Activated CD8-positive, alpha-beta T cell treated with anti-CD3 and anti-CD28 coated beads for 36 hours (primary cell): ENCODE measurements at regions of chr12 and their contacts with region 1.

Region 1: DNA sequence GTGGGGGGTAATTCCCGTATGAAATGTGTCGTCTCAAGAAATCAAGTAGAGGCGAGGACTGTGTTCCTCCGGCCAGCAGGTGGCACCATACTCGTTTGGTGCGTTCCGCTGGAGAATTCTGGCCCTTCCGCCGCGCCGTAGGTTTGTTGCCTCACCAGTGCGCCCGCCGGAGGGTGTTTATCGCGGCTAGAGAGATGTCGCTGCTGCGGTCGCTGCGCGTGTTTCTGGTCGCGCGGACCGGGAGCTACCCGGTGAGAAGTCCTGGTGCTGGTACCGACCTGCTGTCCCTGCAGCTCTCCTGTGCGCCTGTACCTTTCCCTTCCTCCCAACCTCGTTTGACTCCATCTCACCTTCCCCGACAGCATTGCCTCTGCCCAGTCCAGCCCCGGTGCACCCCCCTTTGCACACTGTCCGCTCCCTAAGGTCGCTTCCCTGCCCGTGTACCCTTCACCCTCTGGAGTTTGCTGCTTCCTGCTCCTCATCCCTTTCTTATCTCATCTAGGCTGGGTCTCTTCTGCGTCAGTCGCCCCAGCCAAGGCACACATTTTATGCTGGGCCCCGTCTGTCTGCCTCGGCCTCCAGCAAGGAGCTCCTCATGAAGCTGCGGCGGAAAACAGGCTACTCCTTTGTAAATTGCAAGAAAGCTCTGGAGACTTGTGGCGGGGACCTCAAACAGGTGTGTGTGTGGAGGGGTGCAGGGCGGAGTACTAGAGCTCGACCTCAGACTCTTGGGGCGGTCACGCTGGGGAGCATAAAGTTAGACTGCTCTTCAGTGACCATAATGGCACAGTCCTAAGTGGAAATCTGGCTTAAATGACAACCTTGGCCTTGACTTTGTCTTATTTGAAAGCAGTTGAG is at the start of gene TSFM:
- DNase-seq: peak; percentile 99
- ATAC-seq: peak; percentile 95
- H3K4me3 Mint-ChIP-seq: peak within 1 kb of the TSS; percentile 99
- H3K27ac Mint-ChIP-seq: peak within 1 kb of the TSS; percentile 96
- H3K4me1 Mint-ChIP-seq: peaks cover 28% of the 10 kb centered on the region
- H3K27me3 Mint-ChIP-seq: no peaks in the 10 kb centered on the region
- CTCF ChIP-seq: peak; percentile 97
- total RNA-seq, gene TSFM: 46.3 to 47.3 TPM

Region 2: GRCh38 chr12:57751788-57752667 is 30.8 kb before region 1 on chr12 and contains the start of gene CDK4:
- CTCF ChIA-PET with region 1: interaction called, 16 read pairs
- POLR2A ChIA-PET with region 1: interaction called, 3 read pairs
- intact Hi-C with region 1: no loop called
- DNase-seq: peak; percentile 100
- ATAC-seq: peak; percentile 82
- H3K4me3 Mint-ChIP-seq: peak within 1 kb of the TSS; percentile 86
- H3K27ac Mint-ChIP-seq: peak within 1 kb of the TSS; percentile 94
- H3K4me1 Mint-ChIP-seq: peaks cover 53% of the 10 kb centered on the region
- H3K27me3 Mint-ChIP-seq: no peaks in the 10 kb centered on the region
- CTCF ChIP-seq: no peak
- total RNA-seq, gene CDK4: 218 to 221 TPM

Region 3: GRCh38 chr12:57771708-57772428 is 11.0 kb before region 1 on chr12 and contains the start of gene METTL1:
- CTCF ChIA-PET with region 1: interaction called, 122 read pairs
- POLR2A ChIA-PET with region 1: interaction called, 7 read pairs
- intact Hi-C with region 1: no loop called
- DNase-seq: peak; percentile 98
- ATAC-seq: peak; percentile 89
- H3K4me3 Mint-ChIP-seq: peak within 1 kb of the TSS; percentile 99
- H3K27ac Mint-ChIP-seq: peak within 1 kb of the TSS; percentile 99
- H3K4me1 Mint-ChIP-seq: peaks cover 13% of the 10 kb centered on the region
- H3K27me3 Mint-ChIP-seq: no peaks in the 10 kb centered on the region
- CTCF ChIP-seq: no peak
- total RNA-seq, gene METTL1: 29.6 to 34.1 TPM

Region 4: DNA sequence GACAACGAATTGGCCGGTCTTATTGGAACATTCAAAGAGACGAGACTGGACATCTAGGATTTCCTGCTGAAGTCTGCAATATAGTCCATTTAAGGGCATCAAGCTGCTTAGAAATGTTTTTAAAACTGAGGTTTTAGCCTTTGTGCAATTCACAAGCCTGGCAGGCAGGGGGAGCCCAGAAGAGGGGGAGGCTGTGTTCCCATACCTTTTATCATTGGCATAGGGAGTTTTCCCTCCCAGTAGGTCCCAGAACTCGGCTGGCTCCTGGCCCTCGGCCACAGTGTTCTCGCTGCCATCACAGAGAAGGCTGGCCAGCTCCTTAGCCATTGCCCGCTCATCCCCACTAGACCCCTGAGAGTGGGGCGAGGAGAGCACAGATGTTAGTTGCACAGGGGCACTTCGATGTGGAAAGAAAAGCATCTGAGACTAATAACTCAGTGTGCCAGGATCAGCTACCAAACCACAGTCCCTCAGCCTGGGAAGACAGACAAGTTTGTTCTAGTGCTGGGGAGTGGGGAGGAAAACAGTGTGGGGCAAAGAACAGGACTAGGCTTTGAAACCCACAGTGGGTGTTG is 20.6 kb after region 1 on chr12:
- CTCF ChIA-PET with region 1: interaction called, 13 read pairs
- POLR2A ChIA-PET with region 1: interaction called, 6 read pairs
- intact Hi-C with region 1: no loop called
- DNase-seq: peak; percentile 31
- ATAC-seq: peak; percentile 70
- H3K4me3 Mint-ChIP-seq: no peak overlapping the region
- H3K27ac Mint-ChIP-seq: no peak overlapping the region
- H3K4me1 Mint-ChIP-seq: peaks cover 4% of the 10 kb centered on the region
- H3K27me3 Mint-ChIP-seq: no peaks in the 10 kb centered on the region
- CTCF ChIP-seq: peak; percentile 85

Region 5: GRCh38 chr12:57846577-57847319 is 63.9 kb after region 1 on chr12 and contains the start of gene CTDSP2:
- CTCF ChIA-PET with region 1: interaction called, 17 read pairs
- POLR2A ChIA-PET with region 1: interaction called, 4 read pairs
- intact Hi-C with region 1: no loop called
- DNase-seq: peak; percentile 88
- ATAC-seq: peak; percentile 33
- H3K4me3 Mint-ChIP-seq: peak within 1 kb of the TSS; percentile 81
- H3K27ac Mint-ChIP-seq: peak within 1 kb of the TSS; percentile 92
- H3K4me1 Mint-ChIP-seq: peaks cover 49% of the 10 kb centered on the region
- H3K27me3 Mint-ChIP-seq: peaks cover 8% of the 10 kb centered on the region
- CTCF ChIP-seq: no peak
- total RNA-seq, gene CTDSP2: 67.1 to 67.2 TPM